Right lobe of liver (tissue), 6 donors: ENCODE measurements at regions of chr15 and their contacts with region 1.

Region 1: DNA sequence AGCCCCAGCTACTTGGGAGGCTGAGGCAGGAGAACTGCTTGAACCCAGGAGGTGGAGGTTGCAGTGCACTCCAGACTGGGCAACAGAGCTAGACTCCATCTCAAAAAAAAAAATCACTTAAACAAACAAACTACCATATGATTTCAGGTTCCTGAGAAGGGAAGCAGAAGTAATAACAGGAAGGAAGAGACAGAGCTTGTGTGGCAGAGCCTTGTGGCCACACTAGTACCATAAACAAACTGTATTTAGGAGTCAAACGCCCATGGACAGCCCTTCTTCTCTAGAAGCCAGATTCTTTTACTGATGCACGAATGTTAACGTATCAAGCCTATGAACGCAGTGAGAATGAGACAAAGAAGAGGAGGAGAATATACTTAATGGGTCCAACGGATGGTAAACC is 12.0 kb downstream of the MTMR10 start:
- DNase-seq: no peak
- ATAC-seq: peak in 3 of 4 donors; percentile 26 to 51 (median 41)
- H3K4me3 ChIP-seq: no peak overlapping the region
- H3K27ac ChIP-seq: no peak overlapping the region
- H3K4me1 ChIP-seq: peaks cover 0 to 7% (median 0%) of the 10 kb centered on the region in 4 donors
- H3K27me3 ChIP-seq: no peaks in the 10 kb centered on the region
- CTCF ChIP-seq: no peak
- POLR2A ChIP-seq: no peak

Region 2: GRCh38 chr15:30903497-30904201 is 75.8 kb before region 1 on chr15 and contains the start of gene FAN1:
- intact Hi-C with region 1: no loop called
- DNase-seq: peak; percentile 92 to 95 (median 94)
- ATAC-seq: peak; percentile 95 to 98 (median 97)
- H3K4me3 ChIP-seq: peak within 1 kb of the TSS; percentile 63 to 80 (median 72)
- H3K27ac ChIP-seq: peak within 1 kb of the TSS; percentile 38 to 70 (median 68)
- H3K4me1 ChIP-seq: peaks cover 0 to 15% (median 0%) of the 10 kb centered on the region in 4 donors
- H3K27me3 ChIP-seq: no peaks in the 10 kb centered on the region
- CTCF ChIP-seq: no peak
- POLR2A ChIP-seq: peak; percentile 66
- total RNA-seq, gene FAN1: 7.6 to 16.3 (median 13.3) TPM

Region 3: GRCh38 chr15:31136016-31136415 is 156.6 kb after region 1 on chr15:
- intact Hi-C with region 1: loop called in 1 of 2 experiments (anchors 10 kb)
- DNase-seq: no peak
- ATAC-seq: no peak
- H3K4me3 ChIP-seq: no peak overlapping the region
- H3K27ac ChIP-seq: no peak overlapping the region
- H3K4me1 ChIP-seq: peaks cover 0 to 13% (median 0%) of the 10 kb centered on the region in 4 donors
- H3K27me3 ChIP-seq: no peaks in the 10 kb centered on the region
- CTCF ChIP-seq: no peak
- POLR2A ChIP-seq: no peak